Dorsolateral prefrontal cortex (tissue), 120 donors: ENCODE measurements at regions of chr2 and their contacts with region 1.

Region 1: DNA sequence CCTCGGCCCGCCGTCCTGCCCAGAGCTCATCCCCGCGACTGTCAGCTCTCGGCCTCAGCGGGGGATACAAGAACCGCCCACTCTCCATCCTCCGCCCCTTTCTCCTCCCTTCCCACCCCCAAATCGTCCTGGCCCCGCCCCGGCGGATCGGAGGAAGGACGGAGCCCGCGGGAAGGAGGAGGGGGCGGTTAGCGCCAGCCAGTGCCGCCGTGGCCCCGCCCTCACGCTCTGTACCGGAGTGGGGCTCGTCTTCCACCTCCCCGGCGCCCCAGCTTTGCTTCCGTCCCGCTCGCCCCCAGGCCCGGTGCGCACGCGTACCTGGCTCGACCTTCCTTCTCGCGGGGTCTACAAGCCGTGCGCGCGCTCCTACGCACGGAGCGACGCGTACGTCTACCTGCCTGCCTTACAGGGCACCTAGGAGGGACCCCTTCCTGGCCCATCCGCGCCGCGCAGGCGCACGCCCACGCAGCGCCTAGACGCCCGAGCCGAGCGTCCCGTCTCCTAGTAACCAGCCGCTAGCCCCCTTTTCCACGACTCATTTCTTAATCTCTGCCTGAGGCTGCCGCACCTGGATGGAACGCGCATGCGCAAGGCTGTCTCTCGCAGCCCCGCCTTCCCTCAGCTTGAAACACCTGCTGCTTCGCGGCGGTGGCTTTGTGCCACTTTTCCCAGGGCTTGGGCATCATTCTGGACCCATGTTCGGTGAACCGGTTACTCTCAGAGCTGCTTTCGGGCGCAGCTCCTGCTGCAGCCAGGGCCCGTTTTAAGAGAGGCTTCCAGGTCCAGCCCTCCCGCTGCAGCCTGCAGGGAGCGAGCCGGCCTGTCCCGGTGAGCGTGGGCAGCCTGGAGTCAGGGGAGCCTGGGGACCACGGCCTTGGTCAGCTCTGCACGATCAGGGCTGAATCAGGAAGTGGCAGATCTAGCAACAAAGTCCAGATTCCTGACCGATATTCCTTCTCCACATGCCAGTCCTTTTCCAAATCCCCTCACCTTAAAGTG is at the start of gene C2orf15:
- DNase-seq: peak; percentile 83 to 98 (median 94)
- H3K4me3 ChIP-seq: peak within 1 kb of the TSS; percentile 63 to 100 (median 89)
- H3K27ac ChIP-seq: peak within 1 kb of the TSS; percentile 26 to 98 (median 93)
- H3K27me3 ChIP-seq: no peaks in the 10 kb centered on the region
- CTCF ChIP-seq: peak in 8 of 56 donors; percentile 11 to 33 (median 22)
- total RNA-seq, gene C2orf15: 0.81 to 5.3 (median 2.5) TPM

Region 2: GRCh38 chr2:98608116-98608999 is 533.1 kb before region 1 on chr2 and contains the starts of genes COA5 and UNC50:
- intact Hi-C with region 1: loop called in 1 of 2 experiments (anchors 5 kb)
- DNase-seq: peak; percentile 64 to 92 (median 82)
- H3K4me3 ChIP-seq: peak within 1 kb of the TSS; percentile 60 to 100 (median 98)
- H3K27ac ChIP-seq: peak within 1 kb of the TSS; percentile 70 to 98 (median 93)
- H3K27me3 ChIP-seq: no peaks in the 10 kb centered on the region
- CTCF ChIP-seq: peak in 47 of 56 donors; percentile 3 to 67 (median 37)
- total RNA-seq, gene COA5: 41.4 to 68.3 (median 56.3) TPM
- total RNA-seq, gene UNC50: 30.2 to 65.7 (median 43.9) TPM

Region 3: GRCh38 chr2:99101697-99102096 is 39.7 kb before region 1 on chr2:
- intact Hi-C with region 1: no loop called
- DNase-seq: no peak
- H3K4me3 ChIP-seq: peak overlapping the region in 42 of 59 donors; percentile 1 to 59 (median 26)
- H3K27ac ChIP-seq: peak overlapping the region in 39 of 59 donors; percentile 2 to 82 (median 59)
- H3K27me3 ChIP-seq: no peaks in the 10 kb centered on the region
- CTCF ChIP-seq: peak in 6 of 56 donors; percentile 12 to 23 (median 16)

Region 4: GRCh38 chr2:99154643-99155536 is 13.5 kb after region 1 on chr2 and contains the starts of genes LIPT1 and TSGA10:
- intact Hi-C with region 1: loop called (anchors 1 kb)
- DNase-seq: peak; percentile 83 to 94 (median 91)
- H3K4me3 ChIP-seq: peak within 1 kb of the TSS; percentile 59 to 95 (median 85)
- H3K27ac ChIP-seq: peak within 1 kb of the TSS; percentile 32 to 97 (median 90)
- H3K27me3 ChIP-seq: no peaks in the 10 kb centered on the region
- CTCF ChIP-seq: peak in 40 of 56 donors; percentile 5 to 65 (median 34)
- total RNA-seq, gene LIPT1: 3.8 to 24.2 (median 11.3) TPM
- total RNA-seq, gene TSGA10: 18.6 to 47.7 (median 28.7) TPM

Region 5: DNA sequence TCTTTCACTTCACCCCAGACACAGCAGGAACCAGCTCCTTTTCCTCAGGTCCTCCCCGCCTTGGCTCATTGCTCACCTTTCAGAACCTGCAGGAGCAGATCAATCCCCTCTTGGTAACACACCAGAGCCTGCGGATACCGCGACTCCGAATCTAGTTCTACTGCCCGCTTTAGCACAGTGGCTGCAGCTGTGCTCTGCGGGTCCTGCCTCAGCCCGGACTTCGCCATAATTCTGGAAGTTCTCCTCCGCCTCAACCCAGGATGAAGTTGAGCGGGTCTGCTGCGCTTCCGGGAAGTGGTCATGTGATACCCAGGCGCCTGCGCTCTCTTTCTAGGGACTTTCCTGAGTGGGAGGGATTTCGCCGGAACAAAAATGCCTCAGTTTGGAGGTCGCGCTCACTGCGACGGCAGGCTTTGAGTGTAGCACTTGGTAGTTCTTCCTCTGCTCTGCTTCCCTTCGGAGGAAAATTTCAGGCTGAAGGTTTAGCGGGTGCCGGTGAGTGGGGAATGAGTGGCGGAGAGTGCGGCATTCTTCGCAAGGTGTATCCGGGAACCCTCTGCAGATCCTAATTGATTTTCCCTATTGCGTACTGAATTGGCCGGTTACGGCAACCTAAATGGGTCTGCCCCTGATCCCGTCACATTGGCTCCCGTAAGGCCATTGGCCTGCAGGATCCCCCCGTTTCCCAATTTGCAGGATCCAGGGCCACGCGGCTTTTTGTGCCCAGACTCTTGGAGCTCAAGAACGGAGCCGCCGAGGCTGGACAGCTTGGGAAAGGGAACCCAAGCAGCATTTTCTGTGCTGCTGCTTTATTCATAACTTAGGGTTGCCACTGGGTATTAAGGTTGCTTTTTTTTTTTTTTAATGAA is 39.6 kb after region 1 on chr2 and contains the starts of genes MITD1 and MRPL30:
- intact Hi-C with region 1: loop called in 1 of 2 experiments (anchors 5 kb)
- DNase-seq: peak; percentile 91 to 96 (median 94)
- H3K4me3 ChIP-seq: peak within 1 kb of the TSS; percentile 54 to 99 (median 88)
- H3K27ac ChIP-seq: peak within 1 kb of the TSS in 58 of 59 donors; percentile 17 to 92 (median 81)
- H3K27me3 ChIP-seq: no peaks in the 10 kb centered on the region
- CTCF ChIP-seq: peak in 42 of 56 donors; percentile 3 to 60 (median 39)
- total RNA-seq, gene MITD1: 7.5 to 42.1 (median 22.0) TPM
- total RNA-seq, gene MRPL30: 18.6 to 44.3 (median 31.2) TPM

Region 6: GRCh38 chr2:99198103-99199010 is 56.9 kb after region 1 on chr2:
- intact Hi-C with region 1: no loop called
- DNase-seq: no peak
- H3K4me3 ChIP-seq: no peak overlapping the region
- H3K27ac ChIP-seq: no peak overlapping the region
- H3K27me3 ChIP-seq: no peaks in the 10 kb centered on the region
- CTCF ChIP-seq: no peak